Activated CD4-positive, alpha-beta T cell treated with anti-CD3 and anti-CD28 coated beads for 36 hours (primary cell): ENCODE measurements at regions of chr14 and their contacts with region 1.

Region 1: DNA sequence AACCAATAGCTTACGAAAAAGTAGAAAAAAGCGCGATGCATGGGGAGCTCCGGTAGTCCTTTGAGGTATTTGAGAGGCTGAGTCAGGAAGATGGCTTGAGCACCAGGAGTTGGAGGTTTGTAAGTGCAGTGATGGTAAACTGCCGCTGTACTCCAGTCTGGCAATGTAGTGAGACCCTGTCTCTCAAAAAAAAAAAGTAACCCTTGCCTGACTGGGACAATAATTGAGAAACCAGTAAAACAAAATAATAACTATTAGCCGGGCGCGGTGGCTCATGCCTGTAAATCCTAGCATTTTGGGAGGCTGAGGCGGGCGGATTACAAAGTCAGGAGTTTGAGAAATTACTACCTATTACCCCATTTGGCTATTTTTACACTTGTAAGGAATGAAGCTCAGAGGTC is 632 bp upstream of the ACOT2 start:
- DNase-seq: peak; percentile 50
- ATAC-seq: peak; percentile 32
- H3K4me3 Mint-ChIP-seq: peak overlapping the region; percentile 95
- H3K27ac Mint-ChIP-seq: peak overlapping the region; percentile 97
- H3K4me1 Mint-ChIP-seq: peaks cover 47% of the 10 kb centered on the region
- H3K27me3 Mint-ChIP-seq: no peaks in the 10 kb centered on the region

Region 2: GRCh38 chr14:73295198-73295796 is 273.1 kb before region 1 on chr14:
- CTCF ChIA-PET with region 1: no interaction called
- POLR2A ChIA-PET with region 1: no interaction called
- intact Hi-C with region 1: loop called in 1 of 2 experiments (anchors 10 kb)
- DNase-seq: no peak
- ATAC-seq: no peak
- H3K4me3 Mint-ChIP-seq: no peak overlapping the region
- H3K27ac Mint-ChIP-seq: no peak overlapping the region
- H3K4me1 Mint-ChIP-seq: peaks cover 18% of the 10 kb centered on the region
- H3K27me3 Mint-ChIP-seq: no peaks in the 10 kb centered on the region

Region 3: DNA sequence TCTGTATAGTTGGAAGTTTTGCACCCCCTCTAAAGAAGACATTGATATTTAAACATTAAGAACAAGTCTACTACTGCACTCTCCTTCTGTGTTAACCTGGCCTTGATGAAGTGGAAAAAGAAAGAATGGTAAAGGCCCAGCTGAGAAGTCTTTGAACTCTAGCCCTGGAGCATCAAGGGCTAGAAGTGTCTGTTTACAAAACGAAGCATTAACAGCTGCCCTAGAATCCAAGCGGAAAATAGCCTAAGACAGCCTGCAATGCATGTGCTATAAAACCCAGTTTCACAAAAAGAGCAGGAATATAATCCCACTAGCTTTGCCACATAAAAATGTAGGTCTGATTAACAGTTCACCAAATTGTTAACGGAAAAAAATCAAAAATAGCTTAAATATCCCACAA is 170.6 kb before region 1 on chr14:
- CTCF ChIA-PET with region 1: no interaction called
- POLR2A ChIA-PET with region 1: no interaction called
- intact Hi-C with region 1: no loop called
- DNase-seq: no peak
- ATAC-seq: no peak
- H3K4me3 Mint-ChIP-seq: no peak overlapping the region
- H3K27ac Mint-ChIP-seq: no peak overlapping the region
- H3K4me1 Mint-ChIP-seq: peaks cover 12% of the 10 kb centered on the region
- H3K27me3 Mint-ChIP-seq: no peaks in the 10 kb centered on the region

Region 4: GRCh38 chr14:73503648-73504047 is 64.7 kb before region 1 on chr14:
- CTCF ChIA-PET with region 1: interaction called, 12 read pairs
- POLR2A ChIA-PET with region 1: interaction called, 3 read pairs
- intact Hi-C with region 1: no loop called
- DNase-seq: no peak
- ATAC-seq: no peak
- H3K4me3 Mint-ChIP-seq: no peak overlapping the region
- H3K27ac Mint-ChIP-seq: no peak overlapping the region
- H3K4me1 Mint-ChIP-seq: no peaks in the 10 kb centered on the region
- H3K27me3 Mint-ChIP-seq: no peaks in the 10 kb centered on the region

Region 5: GRCh38 chr14:73613046-73613383 is 44.6 kb after region 1 on chr14:
- CTCF ChIA-PET with region 1: interaction called, 4 read pairs
- POLR2A ChIA-PET with region 1: interaction called, 3 read pairs
- intact Hi-C with region 1: loop called in 1 of 2 experiments (anchors 1 kb)
- DNase-seq: no peak
- ATAC-seq: peak; percentile 2
- H3K4me3 Mint-ChIP-seq: peak overlapping the region; percentile 76
- H3K27ac Mint-ChIP-seq: peak overlapping the region; percentile 80
- H3K4me1 Mint-ChIP-seq: peaks cover 6% of the 10 kb centered on the region
- H3K27me3 Mint-ChIP-seq: no peaks in the 10 kb centered on the region

Region 6: GRCh38 chr14:73644531-73645247 is 76.3 kb after region 1 on chr14 and contains the start of gene DNAL1:
- CTCF ChIA-PET with region 1: interaction called, 3 read pairs
- POLR2A ChIA-PET with region 1: interaction called, 6 read pairs
- intact Hi-C with region 1: loop called in 1 of 2 experiments (anchors 1 kb)
- DNase-seq: peak; percentile 95
- ATAC-seq: peak; percentile 100
- H3K4me3 Mint-ChIP-seq: peak within 1 kb of the TSS; percentile 98
- H3K27ac Mint-ChIP-seq: peak within 1 kb of the TSS; percentile 91
- H3K4me1 Mint-ChIP-seq: peaks cover 16% of the 10 kb centered on the region
- H3K27me3 Mint-ChIP-seq: no peaks in the 10 kb centered on the region
- total RNA-seq, gene DNAL1: 3.7 to 6.8 TPM